ENCODE measurements at regions of chr11 and their contacts with region 1.

Region 1: GRCh38 chr11:97140885-97141494 is 751.2 kb downstream of the JRKL start:
- DNase-seq: no peak
- H3K4me3 Mint-ChIP-seq: no peak overlapping the region
- H3K27ac Mint-ChIP-seq: no peak overlapping the region
- H3K4me1 Mint-ChIP-seq: no peaks in the 10 kb centered on the region
- H3K27me3 Mint-ChIP-seq: no peaks in the 10 kb centered on the region

Region 2: GRCh38 chr11:96464700-96465307 is 676.2 kb before region 1 on chr11:
- intact Hi-C with region 1: loop called (anchors 10 kb)
- DNase-seq: peak; percentile 66
- H3K4me3 Mint-ChIP-seq: no peak overlapping the region
- H3K27ac Mint-ChIP-seq: no peak overlapping the region
- H3K4me1 Mint-ChIP-seq: no peaks in the 10 kb centered on the region
- H3K27me3 Mint-ChIP-seq: peaks cover 12% of the 10 kb centered on the region

Region 3: DNA sequence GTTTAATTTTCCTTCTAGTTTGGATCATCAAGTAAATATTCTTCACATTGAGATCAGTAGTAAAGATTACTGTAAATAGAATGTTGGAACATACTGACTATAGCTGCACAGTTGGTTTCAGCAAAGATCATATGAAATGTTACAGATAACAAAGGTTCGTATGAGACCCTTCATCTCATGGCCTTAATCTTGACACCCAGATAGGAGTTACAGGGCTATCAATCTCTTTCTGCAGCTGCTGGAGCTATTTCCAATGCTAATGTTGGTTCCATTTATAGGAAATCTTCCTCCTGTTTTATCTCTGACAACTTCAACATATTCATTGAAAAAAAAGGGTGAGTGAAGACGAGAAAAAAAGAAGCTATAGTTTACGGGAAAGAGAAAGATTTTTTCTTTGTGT is 255.6 kb before region 1 on chr11:
- intact Hi-C with region 1: no loop called
- DNase-seq: no peak
- H3K4me3 Mint-ChIP-seq: no peak overlapping the region
- H3K27ac Mint-ChIP-seq: no peak overlapping the region
- H3K4me1 Mint-ChIP-seq: no peaks in the 10 kb centered on the region
- H3K27me3 Mint-ChIP-seq: no peaks in the 10 kb centered on the region

Region 4: DNA sequence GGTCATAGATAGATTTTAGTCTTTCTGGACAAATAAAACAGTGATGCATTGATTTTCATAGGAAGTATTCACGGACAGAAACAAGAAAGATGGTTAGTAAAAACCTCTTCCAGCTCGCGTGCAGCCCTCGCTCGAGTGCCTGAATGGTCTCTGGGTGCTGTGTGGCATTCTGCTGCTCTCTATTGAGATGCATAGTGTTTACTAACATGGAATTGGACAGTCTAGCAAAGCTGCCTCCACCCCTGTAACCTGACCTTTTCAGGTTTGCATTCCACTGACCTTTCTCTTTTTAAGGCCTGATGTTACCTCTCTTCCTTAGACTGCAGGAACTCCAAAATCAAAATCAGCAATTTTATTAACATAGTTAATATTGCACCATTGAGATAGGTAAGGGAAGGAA is 107.8 kb before region 1 on chr11:
- intact Hi-C with region 1: no loop called
- DNase-seq: no peak
- H3K4me3 Mint-ChIP-seq: no peak overlapping the region
- H3K27ac Mint-ChIP-seq: no peak overlapping the region
- H3K4me1 Mint-ChIP-seq: no peaks in the 10 kb centered on the region
- H3K27me3 Mint-ChIP-seq: no peaks in the 10 kb centered on the region

Measured in activated CD4-positive, alpha-beta T cell treated with anti-CD3 and anti-CD28 coated beads, Interleukin-2, amount 10 ng/mL, durations not matched to agents 24 days and 14 days (primary cell).